Psoas muscle (tissue), 8 donors: ENCODE measurements at regions of chr12 and their contacts with region 1.

Region 1: DNA sequence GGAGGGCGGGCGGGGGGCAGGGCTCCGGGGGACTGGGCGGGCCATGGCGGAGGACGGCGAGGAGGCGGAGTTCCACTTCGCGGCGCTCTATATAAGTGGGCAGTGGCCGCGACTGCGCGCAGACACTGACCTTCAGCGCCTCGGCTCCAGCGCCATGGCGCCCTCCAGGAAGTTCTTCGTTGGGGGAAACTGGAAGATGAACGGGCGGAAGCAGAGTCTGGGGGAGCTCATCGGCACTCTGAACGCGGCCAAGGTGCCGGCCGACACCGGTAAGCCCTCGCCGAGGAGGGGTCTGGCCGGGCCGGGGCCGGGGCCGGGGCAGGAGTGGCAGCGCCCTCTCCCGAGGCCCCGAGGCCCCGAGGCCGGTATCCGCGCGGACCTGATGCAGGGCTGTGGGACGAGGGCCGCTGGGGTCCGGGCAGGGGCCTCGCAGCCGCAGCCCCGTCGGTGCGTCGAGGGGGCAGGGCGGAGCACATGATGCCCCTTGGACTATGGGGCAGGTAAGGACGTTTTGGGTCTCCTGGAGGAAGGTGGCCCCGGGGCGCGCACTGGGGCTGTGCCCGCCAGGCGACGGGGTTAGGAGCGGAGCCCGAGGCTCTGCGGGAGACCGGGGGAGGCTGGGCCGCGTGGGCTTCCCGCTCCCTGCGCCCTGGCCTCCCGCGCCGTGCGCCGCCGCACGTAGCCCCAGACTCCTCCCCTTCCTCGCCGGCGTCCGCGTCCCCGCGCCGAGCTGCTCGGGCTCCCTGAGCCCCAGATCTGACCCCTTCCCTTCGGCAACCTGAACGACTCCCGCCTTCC is at the start of gene TPI1:
- DNase-seq: peak; percentile 87 to 94
- ATAC-seq: peak; percentile 84 to 88 (median 86)
- H3K4me3 ChIP-seq: peak within 1 kb of the TSS; percentile 94
- H3K27ac ChIP-seq: peak within 1 kb of the TSS; percentile 97
- H3K4me1 ChIP-seq: peaks cover 35% of the 10 kb centered on the region
- H3K27me3 ChIP-seq: no peaks in the 10 kb centered on the region
- CTCF ChIP-seq: no peak
- total RNA-seq, gene TPI1: 537 to 822 (median 624) TPM

Region 2: DNA sequence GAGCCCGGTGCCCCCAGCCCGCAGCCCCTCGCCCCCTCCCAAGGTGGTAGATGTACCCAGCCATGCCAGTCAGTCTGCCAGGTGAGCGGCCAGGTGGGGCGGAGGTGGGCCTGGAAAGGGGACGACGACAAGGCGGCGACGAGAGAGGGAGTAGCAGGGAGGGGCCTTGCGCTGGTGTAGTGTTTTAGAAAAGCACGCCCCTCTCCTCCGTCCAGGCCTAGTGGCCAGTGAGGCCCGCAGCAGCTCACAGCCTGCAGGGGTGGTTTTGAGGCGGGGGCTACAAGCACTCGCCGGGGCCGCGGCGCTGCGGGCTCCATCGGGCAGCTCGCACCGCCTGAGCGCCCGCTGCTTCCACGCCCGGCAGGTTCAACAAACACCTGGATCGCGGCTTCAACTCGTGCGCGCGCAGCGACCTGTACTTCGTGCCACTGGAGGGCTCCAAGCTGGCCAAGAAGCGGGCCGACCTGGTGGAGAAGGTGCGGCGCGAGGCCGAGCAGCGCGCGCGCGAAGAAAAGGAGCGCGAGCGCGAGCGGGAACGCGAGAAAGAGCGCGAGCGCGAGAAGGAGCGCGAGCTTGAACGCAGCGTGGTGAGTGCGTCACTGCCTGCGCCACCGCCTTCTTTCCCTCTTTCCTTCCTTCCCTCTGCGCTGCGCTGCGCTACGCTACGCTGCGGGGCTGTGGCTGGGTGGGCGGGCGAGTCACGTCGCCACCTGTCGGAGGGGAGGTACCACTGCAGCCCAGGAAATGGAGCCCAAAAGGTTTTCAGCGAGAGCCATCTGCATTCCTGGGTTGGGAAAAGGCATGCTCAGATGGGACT is 70.1 kb after region 1 on chr12:
- intact Hi-C with region 1: loop called in 1 of 2 experiments (anchors 5 kb)
- DNase-seq: peak; percentile 94 to 97
- ATAC-seq: peak; percentile 87 to 91 (median 89)
- H3K4me3 ChIP-seq: peak overlapping the region; percentile 86
- H3K27ac ChIP-seq: peak overlapping the region; percentile 93
- H3K4me1 ChIP-seq: peaks cover 32% of the 10 kb centered on the region
- H3K27me3 ChIP-seq: no peaks in the 10 kb centered on the region
- CTCF ChIP-seq: peak; percentile 91

Region 3: GRCh38 chr12:7031306-7031705 is 163.7 kb after region 1 on chr12:
- intact Hi-C with region 1: no loop called
- DNase-seq: no peak
- ATAC-seq: no peak
- H3K4me3 ChIP-seq: no peak overlapping the region
- H3K27ac ChIP-seq: no peak overlapping the region
- H3K4me1 ChIP-seq: no peaks in the 10 kb centered on the region
- H3K27me3 ChIP-seq: no peaks in the 10 kb centered on the region
- CTCF ChIP-seq: no peak

Region 4: GRCh38 chr12:7108796-7109571 is 241.4 kb after region 1 on chr12 and contains the start of gene C1RL:
- intact Hi-C with region 1: loop called in 1 of 2 experiments (anchors 10 kb)
- DNase-seq: peak; percentile 93 to 95
- ATAC-seq: peak; percentile 87 to 93 (median 88)
- H3K4me3 ChIP-seq: peak within 1 kb of the TSS; percentile 75
- H3K27ac ChIP-seq: peak within 1 kb of the TSS; percentile 80
- H3K4me1 ChIP-seq: peaks cover 14% of the 10 kb centered on the region
- H3K27me3 ChIP-seq: no peaks in the 10 kb centered on the region
- CTCF ChIP-seq: peak; percentile 98
- total RNA-seq, gene C1RL: 14.6 to 17.0 (median 15.5) TPM